OCI-LY7 (cell line): ENCODE measurements at regions of chr1 and their contacts with region 1.

Region 1: GRCh38 chr1:208154679-208155642 is 89.2 kb downstream of the PLXNA2 start:
- DNase-seq: no peak
- H3K4me3 ChIP-seq: no peak overlapping the region
- H3K27ac ChIP-seq: no peak overlapping the region
- H3K4me1 ChIP-seq: no peaks in the 10 kb centered on the region
- CTCF ChIP-seq: no peak

Region 2: GRCh38 chr1:208165659-208166058 is 10.7 kb after region 1 on chr1:
- CTCF ChIA-PET with region 1: no interaction called
- POLR2A ChIA-PET with region 1: no interaction called
- intact Hi-C with region 1: no loop called
- DNase-seq: no peak
- H3K4me3 ChIP-seq: no peak overlapping the region
- H3K27ac ChIP-seq: no peak overlapping the region
- H3K4me1 ChIP-seq: peaks cover 5% of the 10 kb centered on the region
- CTCF ChIP-seq: no peak

Region 3: GRCh38 chr1:208203127-208203847 is 48.3 kb after region 1 on chr1:
- CTCF ChIA-PET with region 1: interaction called, 11 read pairs
- POLR2A ChIA-PET with region 1: no interaction called
- intact Hi-C with region 1: no loop called
- DNase-seq: no peak
- H3K4me3 ChIP-seq: no peak overlapping the region
- H3K27ac ChIP-seq: no peak overlapping the region
- H3K4me1 ChIP-seq: no peaks in the 10 kb centered on the region
- CTCF ChIP-seq: no peak